PC-3 (cell line): ENCODE measurements at regions of chr7 and their contacts with region 1.

Region 1: DNA sequence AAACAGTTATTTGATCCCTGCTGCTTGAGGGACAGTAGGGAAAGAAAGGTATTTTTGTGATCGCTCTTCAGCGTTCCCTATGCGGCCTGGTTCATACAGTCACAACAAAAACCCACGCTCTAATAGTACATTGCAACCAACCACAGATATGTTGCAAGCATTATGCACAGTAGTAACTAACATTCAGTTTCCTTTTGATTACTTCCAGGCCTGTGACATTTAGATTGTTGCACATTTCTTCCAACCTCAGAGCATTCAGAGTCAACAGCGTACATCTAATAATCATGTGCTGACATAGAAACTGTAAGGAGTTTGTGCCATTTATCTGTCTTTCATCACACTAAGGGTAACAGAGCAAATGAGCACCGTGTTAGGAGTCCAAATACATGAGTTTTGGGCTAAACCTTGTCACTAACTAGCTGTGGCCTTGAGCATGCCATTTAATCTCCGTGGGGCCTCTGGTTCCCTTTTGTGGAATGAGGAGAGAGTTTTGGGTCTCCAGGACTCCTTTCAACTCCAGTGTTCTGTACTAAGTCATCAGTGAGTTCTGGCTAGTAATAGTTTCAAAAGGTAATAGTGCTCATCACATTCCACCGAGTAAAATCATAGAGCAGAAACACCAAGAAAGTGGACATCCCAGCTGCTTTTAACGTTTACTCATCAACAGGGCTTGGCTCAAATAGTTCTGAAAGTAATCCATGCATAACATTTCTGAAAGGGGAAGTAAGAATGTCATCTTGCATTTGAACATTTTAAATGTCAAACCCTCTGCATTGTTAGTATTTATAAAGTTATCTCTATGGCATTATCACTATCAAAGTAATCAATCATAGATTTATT is 99.0 kb upstream of the FZD1 start:
- DNase-seq: peak; percentile 72
- ATAC-seq: peak; percentile 95
- H3K4me3 ChIP-seq: no peak overlapping the region
- H3K27ac ChIP-seq: no peak overlapping the region
- H3K4me1 ChIP-seq: peaks cover 15% of the 10 kb centered on the region
- H3K27me3 ChIP-seq: no peaks in the 10 kb centered on the region
- CTCF ChIP-seq: no peak

Region 2: DNA sequence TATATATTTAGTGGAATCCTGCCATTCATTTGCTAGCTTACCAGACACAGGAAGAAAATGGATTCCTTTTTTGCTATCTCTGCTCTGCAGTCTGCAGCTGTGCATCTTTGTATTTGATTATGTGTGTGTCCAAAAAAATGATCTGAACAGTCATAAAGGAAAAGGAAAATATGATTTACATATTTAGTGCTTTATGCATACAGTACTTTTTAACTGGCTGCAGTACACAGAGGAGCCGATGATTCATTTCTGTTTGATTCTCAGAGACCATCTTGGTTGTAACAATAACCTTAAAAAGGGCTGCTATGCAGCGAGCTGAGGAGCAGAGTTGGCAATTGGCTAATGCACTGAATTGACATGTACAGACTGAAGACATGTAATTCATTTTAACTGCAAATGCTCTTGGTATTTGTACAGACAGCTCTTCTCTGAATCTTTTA is 52.3 kb before region 1 on chr7:
- CTCF ChIA-PET with region 1: no interaction called
- POLR2A ChIA-PET with region 1: no interaction called
- intact Hi-C with region 1: no loop called
- DNase-seq: no peak
- ATAC-seq: no peak
- H3K4me3 ChIP-seq: no peak overlapping the region
- H3K27ac ChIP-seq: no peak overlapping the region
- H3K4me1 ChIP-seq: no peaks in the 10 kb centered on the region
- H3K27me3 ChIP-seq: no peaks in the 10 kb centered on the region
- CTCF ChIP-seq: no peak

Region 3: DNA sequence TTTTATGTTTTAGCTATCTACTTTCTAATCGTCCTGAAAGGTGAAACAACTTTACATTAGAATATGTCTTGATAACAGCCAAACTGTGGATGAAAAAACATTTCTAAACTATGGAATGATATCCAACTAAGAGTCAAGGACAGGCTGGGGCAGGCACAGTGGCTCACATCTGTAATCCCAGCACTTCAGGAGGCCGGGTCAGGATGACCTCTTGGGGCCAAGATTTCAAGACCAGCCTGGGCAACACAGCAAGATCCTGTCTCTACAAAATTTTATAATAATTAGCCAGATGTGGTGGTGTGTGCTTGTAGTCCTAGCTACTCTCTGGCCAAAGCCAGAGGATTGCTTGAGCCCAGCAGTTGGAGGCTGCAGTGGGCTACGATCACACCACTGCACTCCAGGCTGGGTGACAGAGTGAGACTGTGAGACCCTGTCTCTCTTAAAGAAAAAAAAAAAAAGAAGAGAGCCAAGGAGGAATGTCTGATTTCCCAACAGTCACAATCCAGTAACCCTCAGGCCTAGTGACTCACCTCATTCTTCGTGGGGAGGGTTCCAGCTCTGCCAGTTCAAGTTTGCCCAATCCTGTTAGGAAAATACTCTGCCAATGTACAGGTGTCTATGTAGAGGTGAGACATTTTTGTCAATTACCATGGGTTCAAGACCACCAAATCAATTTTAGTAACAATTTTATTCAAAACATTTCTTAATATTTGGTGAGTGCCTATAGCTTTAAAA is 84.4 kb after region 1 on chr7:
- CTCF ChIA-PET with region 1: no interaction called
- POLR2A ChIA-PET with region 1: interaction called, 31 read pairs
- intact Hi-C with region 1: no loop called
- DNase-seq: peak; percentile 78
- ATAC-seq: peak; percentile 66; the same call in 1 of the 2 replicates
- H3K4me3 ChIP-seq: no peak overlapping the region
- H3K27ac ChIP-seq: no peak overlapping the region
- H3K4me1 ChIP-seq: peaks cover 3% of the 10 kb centered on the region; the same call in 1 of the 2 replicates
- H3K27me3 ChIP-seq: no peaks in the 10 kb centered on the region
- CTCF ChIP-seq: no peak